B cell (primary cell): ENCODE measurements at regions of chr2 and their contacts with region 1.

Region 1: GRCh38 chr2:60745761-60746160 is 10.3 kb upstream of the PAPOLG start:
- DNase-seq: no peak
- ATAC-seq: no peak
- H3K4me3 ChIP-seq: no peak overlapping the region
- H3K4me3 Mint-ChIP-seq: no peak overlapping the region
- H3K27ac ChIP-seq: no peak overlapping the region
- H3K27ac Mint-ChIP-seq: no peak overlapping the region
- H3K4me1 ChIP-seq: peaks cover 6 to 8% of the 10 kb centered on the region in 2 donors
- H3K4me1 Mint-ChIP-seq: peaks cover 9% of the 10 kb centered on the region
- H3K27me3 ChIP-seq: peaks cover 0 to 3% (median 0%) of the 10 kb centered on the region in 4 experiments
- H3K27me3 Mint-ChIP-seq: no peaks in the 10 kb centered on the region
- CTCF ChIP-seq: no peak

Region 2: GRCh38 chr2:60735496-60736250 is 10.1 kb before region 1 on chr2:
- CTCF ChIA-PET with region 1: no interaction called
- POLR2A ChIA-PET with region 1: interaction called, 10 read pairs
- intact Hi-C with region 1: no loop called
- DNase-seq: peak; percentile 30
- ATAC-seq: no peak
- H3K4me3 ChIP-seq: peak overlapping the region in 4 of 5 experiments; percentile 10 to 61 (median 40)
- H3K4me3 Mint-ChIP-seq: peak overlapping the region; percentile 91
- H3K27ac ChIP-seq: no peak overlapping the region
- H3K27ac Mint-ChIP-seq: no peak overlapping the region
- H3K4me1 ChIP-seq: peaks cover 3 to 5% of the 10 kb centered on the region in 2 donors
- H3K4me1 Mint-ChIP-seq: peaks cover 10% of the 10 kb centered on the region
- H3K27me3 ChIP-seq: peaks cover 0 to 34% (median 9%) of the 10 kb centered on the region in 4 experiments
- H3K27me3 Mint-ChIP-seq: peaks cover 32% of the 10 kb centered on the region
- CTCF ChIP-seq: no peak

Region 3: GRCh38 chr2:60861736-60862135 is 116.0 kb after region 1 on chr2:
- CTCF ChIA-PET with region 1: no interaction called
- POLR2A ChIA-PET with region 1: no interaction called
- intact Hi-C with region 1: no loop called
- DNase-seq: no peak
- ATAC-seq: no peak
- H3K4me3 ChIP-seq: no peak overlapping the region
- H3K4me3 Mint-ChIP-seq: no peak overlapping the region
- H3K27ac ChIP-seq: no peak overlapping the region
- H3K27ac Mint-ChIP-seq: no peak overlapping the region
- H3K4me1 ChIP-seq: peaks cover 31 to 41% of the 10 kb centered on the region in 2 donors
- H3K4me1 Mint-ChIP-seq: peaks cover 34% of the 10 kb centered on the region
- H3K27me3 ChIP-seq: no peaks in the 10 kb centered on the region
- H3K27me3 Mint-ChIP-seq: no peaks in the 10 kb centered on the region
- CTCF ChIP-seq: no peak